CD4-positive, alpha-beta T cell (primary cell): ENCODE measurements at regions of chr4 and their contacts with region 1.

Region 1: DNA sequence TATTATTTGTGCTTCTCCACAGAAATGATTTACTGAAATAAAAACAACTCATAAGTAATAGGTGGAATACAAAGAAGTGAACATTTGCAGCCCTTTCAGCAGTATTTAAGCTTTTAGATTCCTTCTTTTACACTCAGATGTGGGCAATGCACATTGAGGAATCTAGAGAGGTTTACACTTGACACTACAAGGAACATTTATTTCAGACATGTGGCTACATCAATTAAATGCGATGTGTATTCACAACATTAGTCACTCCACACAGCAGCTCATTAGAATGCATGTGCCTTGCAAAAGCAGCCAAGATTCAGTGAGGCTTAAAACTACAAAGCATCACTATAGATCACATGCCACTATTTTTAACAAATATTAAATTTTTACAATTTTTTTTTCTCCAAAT is 480.7 kb downstream of the INPP4B start:
- DNase-seq: no peak
- ATAC-seq: no peak
- H3K4me3 ChIP-seq: no peak overlapping the region
- H3K4me3 Mint-ChIP-seq: peak overlapping the region; percentile 8
- H3K27ac ChIP-seq: no peak overlapping the region
- H3K27ac Mint-ChIP-seq: peak overlapping the region; percentile 73
- H3K4me1 ChIP-seq: peaks cover 31% of the 10 kb centered on the region
- H3K4me1 Mint-ChIP-seq: peaks cover 84% of the 10 kb centered on the region
- H3K27me3 ChIP-seq: no peaks in the 10 kb centered on the region
- H3K27me3 Mint-ChIP-seq: no peaks in the 10 kb centered on the region
- CTCF ChIP-seq: no peak

Region 2: GRCh38 chr4:142379277-142380057 is 14.1 kb after region 1 on chr4:
- CTCF ChIA-PET with region 1: interaction called, 9 read pairs
- POLR2A ChIA-PET with region 1: interaction called, 21 read pairs
- intact Hi-C with region 1: no loop called
- DNase-seq: no peak
- ATAC-seq: no peak
- H3K4me3 ChIP-seq: no peak overlapping the region
- H3K4me3 Mint-ChIP-seq: peak overlapping the region; percentile 23
- H3K27ac ChIP-seq: no peak overlapping the region
- H3K27ac Mint-ChIP-seq: peak overlapping the region; percentile 84
- H3K4me1 ChIP-seq: peaks cover 21% of the 10 kb centered on the region
- H3K4me1 Mint-ChIP-seq: peaks cover 90% of the 10 kb centered on the region
- H3K27me3 ChIP-seq: no peaks in the 10 kb centered on the region
- H3K27me3 Mint-ChIP-seq: no peaks in the 10 kb centered on the region
- CTCF ChIP-seq: no peak

Region 3: GRCh38 chr4:142396279-142396678 is 30.9 kb after region 1 on chr4:
- CTCF ChIA-PET with region 1: no interaction called
- POLR2A ChIA-PET with region 1: no interaction called
- intact Hi-C with region 1: no loop called
- DNase-seq: no peak
- ATAC-seq: no peak
- H3K4me3 ChIP-seq: peak overlapping the region; percentile 36
- H3K4me3 Mint-ChIP-seq: peak overlapping the region; percentile 64
- H3K27ac ChIP-seq: no peak overlapping the region
- H3K27ac Mint-ChIP-seq: peak overlapping the region; percentile 93
- H3K4me1 ChIP-seq: peaks cover 33% of the 10 kb centered on the region
- H3K4me1 Mint-ChIP-seq: peaks cover 92% of the 10 kb centered on the region
- H3K27me3 ChIP-seq: no peaks in the 10 kb centered on the region
- H3K27me3 Mint-ChIP-seq: no peaks in the 10 kb centered on the region
- CTCF ChIP-seq: no peak

Region 4: GRCh38 chr4:142913461-142914030 is 548.2 kb after region 1 on chr4:
- CTCF ChIA-PET with region 1: no interaction called
- POLR2A ChIA-PET with region 1: no interaction called
- intact Hi-C with region 1: no loop called
- DNase-seq: no peak
- ATAC-seq: no peak
- H3K4me3 ChIP-seq: no peak overlapping the region
- H3K4me3 Mint-ChIP-seq: no peak overlapping the region
- H3K27ac ChIP-seq: no peak overlapping the region
- H3K27ac Mint-ChIP-seq: no peak overlapping the region
- H3K4me1 ChIP-seq: no peaks in the 10 kb centered on the region
- H3K4me1 Mint-ChIP-seq: no peaks in the 10 kb centered on the region
- H3K27me3 ChIP-seq: peaks cover 6 to 15% of the 10 kb centered on the region in 2 experiments
- H3K27me3 Mint-ChIP-seq: peaks cover 12% of the 10 kb centered on the region
- CTCF ChIP-seq: no peak